ENCODE measurements at regions of chr17 and their contacts with region 1.

Region 1: DNA sequence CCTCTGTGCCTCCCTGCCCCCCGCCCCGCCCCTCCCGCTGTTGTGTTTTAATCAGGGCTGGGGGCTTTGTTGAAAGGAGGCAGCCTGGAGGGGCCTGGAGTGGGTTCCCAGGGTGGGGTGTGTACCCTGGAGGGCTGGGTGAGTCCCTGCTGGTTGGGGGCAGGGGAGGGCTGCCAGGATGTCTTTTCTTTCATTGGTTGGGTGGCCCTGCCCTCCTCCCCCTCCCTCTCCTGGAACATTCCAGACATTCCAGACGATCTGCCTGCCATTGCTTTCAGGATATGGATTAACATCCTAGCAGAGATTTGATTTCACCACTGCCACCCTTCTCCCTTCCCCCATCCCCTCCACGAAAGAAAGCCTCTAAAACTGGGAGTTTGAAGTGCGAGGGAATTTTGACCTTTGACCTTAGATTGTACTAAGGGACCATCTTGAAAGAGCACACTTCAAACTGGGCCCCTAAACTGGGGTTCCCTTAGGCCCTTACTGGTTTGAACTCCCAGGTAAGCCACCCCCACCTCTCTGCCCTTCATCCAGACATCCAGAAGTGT is 25.3 kb downstream of the IGF2BP1 start:
- DNase-seq: peak; percentile 80 to 92
- H3K4me3 ChIP-seq: peak overlapping the region in 3 of 4 experiments; percentile 12 to 44 (median 26); a peak in 4 of 8 replicates
- H3K27ac ChIP-seq: peak overlapping the region; percentile 90
- H3K4me1 ChIP-seq: peaks cover 19 to 45% (median 34%) of the 10 kb centered on the region in 4 experiments
- H3K27me3 ChIP-seq: no peaks in the 10 kb centered on the region
- CTCF ChIP-seq: no peak
- EP300 ChIP-seq: peak in 1 of 2 experiments; percentile 91; a peak in 1 of 3 replicates
- POLR2A ChIP-seq: no peak; a peak in 1 of 3 replicates
- RAD21 ChIP-seq: peak in 1 of 2 experiments; percentile 7; a peak in 1 of 4 replicates

Region 2: DNA sequence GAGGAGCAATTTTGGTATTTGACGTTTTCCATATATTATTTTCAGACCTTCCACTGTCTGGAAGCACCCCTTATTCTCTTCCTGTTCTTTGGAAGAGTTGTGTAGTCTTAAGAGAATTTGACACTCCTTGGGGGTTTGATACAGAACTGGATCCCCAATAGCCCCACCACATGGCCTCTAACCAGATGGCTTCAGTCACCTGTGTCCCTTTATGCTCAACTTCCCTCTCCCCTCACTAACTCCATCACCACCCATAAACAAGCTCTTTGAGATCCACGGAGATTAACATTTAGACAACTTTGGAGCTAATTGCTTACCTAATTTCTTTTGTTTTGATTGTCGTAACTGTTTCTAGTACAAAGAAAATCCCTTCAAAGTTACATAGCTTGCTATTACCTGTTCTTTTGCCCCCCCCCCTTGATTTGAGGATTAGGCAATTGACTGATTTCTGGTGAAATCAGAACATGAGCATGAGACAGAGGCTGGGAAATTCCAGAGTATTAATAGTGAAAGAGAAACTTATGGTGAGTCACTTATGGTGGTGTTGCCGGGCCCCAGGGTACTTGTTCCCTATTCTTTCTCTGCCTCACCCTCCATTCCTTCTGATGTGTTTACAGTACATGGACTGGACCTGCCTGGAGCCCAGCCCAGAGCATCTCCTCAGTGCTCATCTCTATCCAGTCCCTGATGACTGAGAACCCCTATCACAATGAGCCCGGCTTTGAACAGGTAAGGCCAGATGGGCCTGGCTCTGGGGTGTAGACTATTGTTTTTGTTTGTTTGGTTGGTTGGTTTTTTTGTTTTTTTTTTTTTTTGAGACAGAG is 106.8 kb before region 1 on chr17:
- CTCF ChIA-PET with region 1: no interaction called
- POLR2A ChIA-PET with region 1: no interaction called
- DNase-seq: no peak
- H3K4me3 ChIP-seq: no peak overlapping the region
- H3K27ac ChIP-seq: no peak overlapping the region
- H3K4me1 ChIP-seq: peaks cover 0 to 5% (median 0%) of the 10 kb centered on the region in 4 experiments; a peak in 1 of 7 replicates
- H3K27me3 ChIP-seq: no peaks in the 10 kb centered on the region
- CTCF ChIP-seq: no peak
- EP300 ChIP-seq: no peak
- POLR2A ChIP-seq: no peak
- RAD21 ChIP-seq: no peak

Region 3: DNA sequence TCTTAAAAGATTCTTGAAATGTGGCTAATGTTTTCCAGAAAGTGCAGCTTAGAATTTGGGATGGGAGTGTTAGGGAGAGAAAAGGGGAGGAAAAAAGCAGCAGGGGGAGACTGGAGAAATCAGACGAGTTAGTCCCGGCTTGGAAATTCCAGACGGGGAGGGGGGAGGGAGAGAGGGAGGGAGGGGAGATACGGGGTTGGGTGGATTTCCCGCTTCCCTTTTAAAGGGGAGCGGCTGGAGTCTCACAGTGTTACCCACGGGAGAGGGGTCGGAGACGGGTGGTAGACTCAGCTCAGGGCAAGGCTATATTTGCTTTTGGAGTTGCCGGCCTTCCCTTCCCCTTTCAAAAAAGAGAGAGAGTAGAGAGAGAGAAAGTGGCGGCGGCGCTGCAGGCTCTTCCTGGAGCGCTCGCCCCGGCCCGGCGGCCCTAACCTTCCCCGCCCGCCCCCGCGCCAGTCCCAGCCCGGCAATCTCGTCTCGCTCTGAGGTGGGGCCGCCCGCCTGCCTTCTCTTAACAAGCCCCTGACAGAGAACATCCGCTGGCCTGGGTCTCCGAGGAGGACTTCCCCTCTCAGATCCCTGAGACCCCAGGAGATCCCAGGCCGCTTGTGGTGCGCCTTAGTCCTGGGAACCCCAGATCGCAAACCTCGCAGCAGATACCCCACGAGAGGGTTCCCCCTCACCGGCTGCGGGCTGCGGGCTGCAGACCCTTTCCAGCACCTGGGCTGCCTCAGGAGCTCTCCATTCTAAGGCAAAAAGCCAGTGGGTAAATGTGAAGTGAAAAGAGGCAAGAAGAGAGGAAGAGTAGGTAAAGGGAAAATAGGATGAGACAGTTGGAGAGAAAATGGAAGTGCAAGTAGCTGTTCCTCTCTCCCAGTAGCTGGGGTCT is 18.6 kb before region 1 on chr17:
- CTCF ChIA-PET with region 1: interaction called, 18 read pairs
- POLR2A ChIA-PET with region 1: interaction called, 366 read pairs
- DNase-seq: peak in 1 of 2 experiments; percentile 67
- H3K4me3 ChIP-seq: peak overlapping the region; percentile 34 to 91 (median 46); a peak in 7 of 8 replicates
- H3K27ac ChIP-seq: no peak overlapping the region
- H3K4me1 ChIP-seq: peaks cover 1 to 25% (median 19%) of the 10 kb centered on the region in 4 experiments; a peak in 6 of 7 replicates
- H3K27me3 ChIP-seq: no peaks in the 10 kb centered on the region
- CTCF ChIP-seq: no peak
- EP300 ChIP-seq: no peak
- POLR2A ChIP-seq: no peak; a peak in 1 of 3 replicates
- RAD21 ChIP-seq: no peak; a peak in 2 of 4 replicates

Region 4: DNA sequence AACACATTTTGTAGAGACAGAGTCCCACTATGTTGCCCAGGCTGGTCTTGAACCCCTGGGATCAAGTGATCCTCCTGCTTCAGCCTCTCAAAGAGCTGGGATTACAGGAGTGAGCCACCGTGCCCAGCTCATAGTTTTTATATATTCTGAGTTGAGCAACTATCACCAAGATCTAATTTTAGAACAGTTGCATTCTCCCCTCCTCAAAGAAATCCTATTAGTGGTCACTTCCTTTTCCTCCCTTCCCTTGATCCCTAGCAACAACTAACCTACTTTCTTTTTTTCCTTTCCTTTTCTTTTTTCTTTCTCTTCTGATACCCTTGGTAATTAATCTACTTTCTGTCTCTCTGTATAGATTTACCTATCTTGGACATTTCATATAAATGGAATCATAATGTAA is 48.6 kb after region 1 on chr17:
- CTCF ChIA-PET with region 1: no interaction called
- POLR2A ChIA-PET with region 1: no interaction called
- DNase-seq: no peak
- H3K4me3 ChIP-seq: no peak overlapping the region
- H3K27ac ChIP-seq: no peak overlapping the region
- H3K4me1 ChIP-seq: peaks cover 0 to 7% (median 0%) of the 10 kb centered on the region in 4 experiments; a peak in 2 of 7 replicates
- H3K27me3 ChIP-seq: no peaks in the 10 kb centered on the region
- CTCF ChIP-seq: no peak
- EP300 ChIP-seq: no peak
- POLR2A ChIP-seq: no peak
- RAD21 ChIP-seq: no peak

Region 5: GRCh38 chr17:49157784-49158183 is 135.3 kb after region 1 on chr17:
- CTCF ChIA-PET with region 1: no interaction called
- POLR2A ChIA-PET with region 1: no interaction called
- DNase-seq: no peak
- H3K4me3 ChIP-seq: no peak overlapping the region
- H3K27ac ChIP-seq: no peak overlapping the region
- H3K4me1 ChIP-seq: no peaks in the 10 kb centered on the region
- H3K27me3 ChIP-seq: no peaks in the 10 kb centered on the region
- CTCF ChIP-seq: no peak
- EP300 ChIP-seq: no peak
- POLR2A ChIP-seq: no peak
- RAD21 ChIP-seq: no peak

Measured in H1 (cell line).